A673 (cell line): ENCODE measurements at regions of chr3 and their contacts with region 1.

Region 1: DNA sequence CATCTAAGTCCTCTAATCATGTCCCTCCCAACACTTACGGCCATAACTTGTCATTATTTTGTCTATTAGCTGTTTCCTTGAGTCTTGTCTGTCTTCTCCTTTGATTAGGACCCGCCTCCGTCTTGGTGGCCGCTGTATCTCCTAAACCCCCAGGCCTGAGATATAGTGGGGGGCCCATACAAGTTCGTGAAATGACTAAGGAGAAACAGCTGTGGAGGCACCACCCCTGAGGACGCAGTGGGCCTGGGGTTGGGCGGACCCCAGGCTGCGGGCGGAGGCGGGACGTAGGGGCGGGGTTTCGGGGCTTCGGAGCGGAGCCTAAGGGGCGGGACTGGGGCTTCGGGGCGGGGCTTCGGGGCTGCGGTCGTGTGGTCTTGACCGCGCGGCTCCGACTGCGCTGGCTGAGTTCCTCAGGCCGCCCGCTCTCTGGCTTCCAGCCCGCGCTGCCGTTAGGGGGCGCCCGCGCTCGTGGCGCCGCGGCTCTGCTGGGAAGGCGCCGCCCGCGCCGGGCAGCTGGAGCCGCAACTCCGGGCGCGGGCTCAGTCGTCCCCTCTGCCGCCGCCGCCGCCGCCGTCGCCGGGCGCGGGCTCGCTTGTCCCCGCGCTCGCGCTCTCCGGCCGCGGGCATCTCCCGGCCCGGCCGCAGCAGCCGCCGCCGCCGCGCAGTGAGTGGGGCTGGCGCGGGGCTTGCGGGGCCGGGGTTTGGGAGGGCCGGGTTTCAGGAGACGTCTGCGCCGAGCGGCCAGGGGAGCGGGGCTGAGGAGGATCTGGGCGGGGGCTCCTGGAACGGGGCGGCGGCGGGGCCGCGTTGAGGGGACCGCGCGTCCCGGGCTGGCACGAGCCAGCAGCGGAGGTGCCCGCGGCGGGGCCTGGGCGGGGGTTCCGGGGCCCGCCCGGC is at the start of gene KCTD6:
- DNase-seq: peak; percentile 89
- H3K4me3 ChIP-seq: peak within 1 kb of the TSS; percentile 74
- H3K27ac ChIP-seq: peak within 1 kb of the TSS; percentile 70
- H3K4me1 ChIP-seq: peaks cover 22% of the 10 kb centered on the region
- H3K27me3 ChIP-seq: no peaks in the 10 kb centered on the region
- CTCF ChIP-seq: peak; percentile 49; the same call in 1 of the 2 replicates
- total RNA-seq, gene KCTD6: 14.2 and 14.3 TPM in 2 replicates

Region 2: GRCh38 chr3:58526515-58526957 is 34.8 kb after region 1 on chr3:
- CTCF ChIA-PET with region 1: no interaction called
- POLR2A ChIA-PET with region 1: no interaction called
- intact Hi-C with region 1: loop called (anchors 5 kb)
- DNase-seq: peak; percentile 87
- H3K4me3 ChIP-seq: no peak overlapping the region
- H3K27ac ChIP-seq: no peak overlapping the region
- H3K4me1 ChIP-seq: peaks cover 24% of the 10 kb centered on the region
- H3K27me3 ChIP-seq: no peaks in the 10 kb centered on the region
- CTCF ChIP-seq: no peak

Region 3: GRCh38 chr3:58607816-58608215 is 116.1 kb after region 1 on chr3:
- CTCF ChIA-PET with region 1: no interaction called
- POLR2A ChIA-PET with region 1: no interaction called
- intact Hi-C with region 1: no loop called
- DNase-seq: no peak
- H3K4me3 ChIP-seq: no peak overlapping the region
- H3K27ac ChIP-seq: no peak overlapping the region
- H3K4me1 ChIP-seq: no peaks in the 10 kb centered on the region
- H3K27me3 ChIP-seq: no peaks in the 10 kb centered on the region
- CTCF ChIP-seq: no peak

Region 4: GRCh38 chr3:58766587-58767282 is 275.0 kb after region 1 on chr3:
- CTCF ChIA-PET with region 1: no interaction called
- POLR2A ChIA-PET with region 1: no interaction called
- intact Hi-C with region 1: no loop called
- DNase-seq: no peak
- H3K4me3 ChIP-seq: no peak overlapping the region
- H3K27ac ChIP-seq: no peak overlapping the region
- H3K4me1 ChIP-seq: no peaks in the 10 kb centered on the region
- H3K27me3 ChIP-seq: no peaks in the 10 kb centered on the region
- CTCF ChIP-seq: no peak

Region 5: DNA sequence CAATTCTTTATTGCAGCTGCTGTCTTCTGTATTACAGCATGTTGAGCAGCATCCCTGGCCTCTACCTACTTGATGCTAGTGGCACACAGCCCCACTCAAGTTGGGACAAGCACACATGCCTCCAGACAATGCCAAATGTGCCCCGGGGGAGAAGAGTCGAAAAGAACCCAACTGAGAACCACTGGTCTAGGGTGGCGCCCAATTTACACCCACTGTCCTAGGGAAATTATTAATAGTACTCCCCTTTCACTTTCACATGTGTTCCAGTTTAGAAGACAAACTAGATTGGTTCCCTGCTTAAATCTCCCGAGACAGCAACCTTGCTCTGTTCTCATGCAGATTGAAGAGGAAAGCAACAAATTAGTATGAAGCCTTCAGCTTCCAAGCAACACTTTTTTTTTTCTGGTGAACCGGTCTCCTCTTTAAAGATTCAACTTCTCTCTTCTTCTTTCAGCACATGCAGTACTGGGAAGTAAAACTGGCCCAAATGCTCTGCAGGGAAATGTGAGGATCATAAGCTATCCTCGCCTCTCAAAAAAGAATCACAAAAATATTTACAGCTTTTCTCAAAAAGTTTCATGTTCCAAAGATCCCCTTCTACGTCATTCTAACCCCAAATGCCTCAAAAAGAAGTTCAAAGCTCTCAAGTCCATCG is 1381.9 kb after region 1 on chr3:
- CTCF ChIA-PET with region 1: no interaction called
- POLR2A ChIA-PET with region 1: no interaction called
- intact Hi-C with region 1: no loop called
- DNase-seq: no peak
- H3K4me3 ChIP-seq: no peak overlapping the region
- H3K27ac ChIP-seq: no peak overlapping the region
- H3K4me1 ChIP-seq: no peaks in the 10 kb centered on the region
- H3K27me3 ChIP-seq: no peaks in the 10 kb centered on the region
- CTCF ChIP-seq: no peak